ENCODE measurements at regions of chr9 and their contacts with region 1.

Region 1: GRCh38 chr9:129139993-129140396 is 28.8 kb downstream of the PTPA start:
- DNase-seq: peak; percentile 70
- ATAC-seq: peak; percentile 58
- H3K4me3 Mint-ChIP-seq: peak overlapping the region; percentile 66
- H3K27ac Mint-ChIP-seq: peak overlapping the region; percentile 97
- H3K4me1 Mint-ChIP-seq: peaks cover 62% of the 10 kb centered on the region
- H3K27me3 Mint-ChIP-seq: no peaks in the 10 kb centered on the region
- CTCF ChIP-seq: no peak

Region 2: DNA sequence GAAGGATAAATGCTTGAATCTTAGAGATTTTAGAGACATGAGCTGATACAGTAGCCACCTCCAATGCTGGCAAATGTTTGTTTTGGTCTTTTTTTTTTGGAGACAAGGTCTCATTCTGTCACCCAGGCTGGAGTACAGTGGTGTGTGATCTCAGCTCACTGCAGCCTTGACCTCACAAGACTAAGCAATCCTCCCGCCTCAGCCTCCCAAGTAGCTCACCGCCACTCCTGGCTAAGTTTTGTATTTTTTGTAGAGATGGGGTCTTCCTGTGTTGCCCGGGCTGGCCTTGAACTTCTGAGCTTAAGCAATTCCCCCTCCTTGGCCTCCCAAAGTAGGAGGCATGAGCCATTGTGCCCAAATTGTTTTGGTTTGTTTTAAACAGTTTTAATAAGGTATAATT is 65.9 kb before region 1 on chr9:
- CTCF ChIA-PET with region 1: no interaction called
- POLR2A ChIA-PET with region 1: no interaction called
- DNase-seq: no peak
- ATAC-seq: no peak
- H3K4me3 Mint-ChIP-seq: no peak overlapping the region
- H3K27ac Mint-ChIP-seq: peak overlapping the region; percentile 45; the same call in 1 of the 2 replicates
- H3K4me1 Mint-ChIP-seq: peaks cover 29% of the 10 kb centered on the region
- H3K27me3 Mint-ChIP-seq: no peaks in the 10 kb centered on the region
- CTCF ChIP-seq: no peak

Region 3: GRCh38 chr9:129125476-129125875 is 14.5 kb before region 1 on chr9:
- CTCF ChIA-PET with region 1: interaction called, 142 read pairs
- POLR2A ChIA-PET with region 1: interaction called, 5 read pairs
- DNase-seq: no peak
- ATAC-seq: no peak
- H3K4me3 Mint-ChIP-seq: no peak overlapping the region
- H3K27ac Mint-ChIP-seq: peak overlapping the region; percentile 84
- H3K4me1 Mint-ChIP-seq: peaks cover 25% of the 10 kb centered on the region
- H3K27me3 Mint-ChIP-seq: no peaks in the 10 kb centered on the region
- CTCF ChIP-seq: no peak

Region 4: DNA sequence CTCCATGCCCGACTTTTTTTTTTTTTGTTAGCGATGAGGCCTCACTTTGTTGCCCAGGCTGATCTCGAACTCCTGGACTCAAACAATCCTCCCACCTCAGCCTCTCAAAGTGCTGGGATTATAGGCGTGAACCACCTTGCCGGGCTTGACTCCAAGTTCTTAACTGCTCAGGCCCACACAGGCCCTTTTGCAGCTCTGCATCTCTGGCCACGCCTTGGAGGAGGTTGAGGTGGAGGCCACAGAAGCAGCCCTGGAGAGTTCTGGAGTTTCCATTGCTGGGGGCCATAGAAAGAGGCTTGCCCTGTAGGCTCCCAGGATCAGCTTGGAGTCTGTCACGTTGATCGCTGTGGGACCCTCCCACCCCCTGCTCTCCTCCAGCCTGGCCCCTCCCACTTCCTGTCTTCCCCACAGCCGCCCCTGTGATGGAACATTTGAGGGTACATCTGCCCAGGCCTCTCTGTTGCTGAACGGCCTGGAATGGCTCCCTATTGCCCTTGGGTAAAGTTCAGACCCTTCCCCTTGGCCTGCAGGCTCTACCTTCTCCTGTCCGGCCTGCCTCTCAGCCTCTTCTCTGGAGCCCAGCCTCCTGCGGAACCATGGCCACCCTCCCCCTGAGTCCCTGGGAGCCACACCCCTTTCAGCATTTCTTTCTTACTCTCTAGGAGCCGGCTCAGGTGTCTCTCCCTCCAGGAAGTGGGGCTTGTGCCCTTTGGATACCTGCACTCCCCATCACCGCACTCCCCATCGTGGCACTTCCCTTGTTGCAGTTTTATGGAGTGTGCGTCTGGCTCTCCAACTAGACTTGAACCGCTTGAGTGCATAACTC is 68.4 kb after region 1 on chr9:
- CTCF ChIA-PET with region 1: interaction called, 11 read pairs
- POLR2A ChIA-PET with region 1: no interaction called
- DNase-seq: peak; percentile 84
- ATAC-seq: peak; percentile 87
- H3K4me3 Mint-ChIP-seq: peak overlapping the region; percentile 97
- H3K27ac Mint-ChIP-seq: peak overlapping the region; percentile 98
- H3K4me1 Mint-ChIP-seq: peaks cover 38% of the 10 kb centered on the region
- H3K27me3 Mint-ChIP-seq: peaks cover 3% of the 10 kb centered on the region; the same call in 1 of the 2 replicates
- CTCF ChIP-seq: no peak

Region 5: DNA sequence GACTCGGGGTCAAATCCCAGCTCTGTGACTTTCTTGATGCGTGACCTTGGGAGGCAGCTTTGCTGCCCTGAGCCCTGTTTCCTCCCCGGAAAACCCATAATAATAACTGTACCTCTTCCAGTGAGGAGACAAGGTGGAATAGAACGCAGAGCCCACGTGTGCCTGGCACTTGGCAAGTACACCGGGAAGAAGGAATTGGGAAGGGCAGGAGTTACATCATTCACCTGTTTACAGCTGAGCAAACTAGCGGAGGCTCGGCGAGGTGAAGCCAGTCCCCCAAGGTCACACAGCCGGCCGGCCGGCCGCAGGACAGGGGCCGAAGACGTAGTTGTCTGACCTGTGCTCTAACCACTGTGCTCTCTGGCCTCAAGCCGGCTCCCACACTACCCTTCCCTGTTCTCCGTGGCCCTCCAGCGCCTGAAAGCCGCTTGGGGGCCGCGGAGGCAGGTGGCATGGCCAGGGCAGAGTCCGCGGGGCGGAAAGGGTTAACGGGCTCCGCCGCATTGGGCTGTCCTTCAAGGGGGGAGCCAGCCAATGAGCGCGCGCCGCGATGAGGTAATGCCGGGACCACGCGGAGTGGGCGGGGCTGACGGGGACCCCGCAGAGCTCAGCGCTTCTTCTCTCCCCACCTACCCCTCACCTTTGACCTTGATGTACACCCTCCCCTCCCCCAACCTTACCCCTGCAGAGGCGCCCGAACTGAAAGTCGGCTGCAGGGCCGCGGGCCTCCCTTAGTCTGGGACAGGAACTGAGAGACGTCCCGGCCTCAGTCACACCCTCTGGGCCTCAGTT is 355.7 kb after region 1 on chr9:
- CTCF ChIA-PET with region 1: interaction called, 18 read pairs
- POLR2A ChIA-PET with region 1: interaction called, 8 read pairs
- DNase-seq: peak; percentile 97
- ATAC-seq: peak; percentile 77
- H3K4me3 Mint-ChIP-seq: peak overlapping the region; percentile 89
- H3K27ac Mint-ChIP-seq: peak overlapping the region; percentile 74; the same call in 1 of the 2 replicates
- H3K4me1 Mint-ChIP-seq: peaks cover 58% of the 10 kb centered on the region
- H3K27me3 Mint-ChIP-seq: peaks cover 61% of the 10 kb centered on the region
- CTCF ChIP-seq: no peak

Region 6: DNA sequence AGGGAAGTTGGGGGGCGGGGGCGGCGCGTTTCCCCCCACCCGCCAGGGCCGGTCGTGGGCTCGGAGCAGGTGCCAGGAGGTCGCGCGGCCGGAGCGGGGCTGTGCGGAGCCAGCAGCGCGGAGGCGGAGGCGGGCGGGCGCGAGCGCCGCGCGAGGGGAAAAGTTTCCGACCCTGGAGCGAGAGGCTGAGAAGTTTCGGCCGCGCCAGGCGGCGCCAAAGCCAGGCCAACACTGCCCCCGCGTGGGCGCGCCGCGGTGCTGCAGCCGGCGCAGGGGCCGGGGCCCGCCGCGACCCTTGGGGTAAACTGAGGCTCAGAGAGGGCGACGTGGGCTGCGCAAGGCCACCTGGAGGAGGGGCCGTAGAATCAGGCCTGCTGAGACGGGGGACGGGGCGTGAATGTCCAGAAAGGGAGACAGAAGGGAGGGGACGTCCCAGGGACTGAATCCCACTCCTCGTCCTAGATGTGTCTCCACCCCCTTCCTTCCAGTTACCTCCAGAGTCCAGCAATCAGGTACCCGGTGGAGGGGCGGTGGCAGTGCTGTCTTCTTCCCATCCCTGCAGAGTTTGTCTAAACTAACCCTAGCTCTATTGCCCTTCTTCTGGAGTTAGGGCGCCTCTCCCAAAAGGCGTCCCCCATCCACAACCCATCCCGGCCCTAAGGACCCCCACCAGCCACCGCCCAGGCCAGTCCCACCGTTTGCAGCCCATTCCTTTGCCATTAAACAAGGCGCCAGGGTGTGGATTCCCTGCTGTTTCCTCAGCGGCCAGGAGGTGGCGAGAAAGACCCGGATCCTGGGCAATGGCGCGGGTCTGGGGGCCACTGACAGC is 470.7 kb after region 1 on chr9:
- CTCF ChIA-PET with region 1: interaction called, 15 read pairs
- POLR2A ChIA-PET with region 1: no interaction called
- DNase-seq: peak; percentile 94
- ATAC-seq: peak; percentile 61
- H3K4me3 Mint-ChIP-seq: peak overlapping the region; percentile 72
- H3K27ac Mint-ChIP-seq: peak overlapping the region; percentile 74; the same call in 1 of the 2 replicates
- H3K4me1 Mint-ChIP-seq: peaks cover 24% of the 10 kb centered on the region
- H3K27me3 Mint-ChIP-seq: peaks cover 11% of the 10 kb centered on the region
- CTCF ChIP-seq: peak; percentile 92